ENCODE measurements at regions of chr22 and their contacts with region 1.

Region 1: GRCh38 chr22:39496131-39496838 is 5.8 kb upstream of the MIEF1 start:
- DNase-seq: peak in 8 of 9 experiments; percentile 28 to 63 (median 52)
- ATAC-seq: peak; percentile 75
- H3K4me3 ChIP-seq: no peak overlapping the region
- H3K4me3 Mint-ChIP-seq: no peak overlapping the region
- H3K27ac ChIP-seq: no peak overlapping the region
- H3K27ac Mint-ChIP-seq: no peak overlapping the region
- H3K4me1 ChIP-seq: no peaks in the 10 kb centered on the region
- H3K4me1 Mint-ChIP-seq: peaks cover 8% of the 10 kb centered on the region
- H3K27me3 ChIP-seq: no peaks in the 10 kb centered on the region
- H3K27me3 Mint-ChIP-seq: no peaks in the 10 kb centered on the region
- CTCF ChIP-seq: peak; percentile 71

Region 2: GRCh38 chr22:39439170-39439569 is 57.1 kb before region 1 on chr22:
- CTCF ChIA-PET with region 1: interaction called, 18 read pairs
- POLR2A ChIA-PET with region 1: no interaction called
- intact Hi-C with region 1: no loop called
- DNase-seq: no peak
- ATAC-seq: no peak
- H3K4me3 ChIP-seq: no peak overlapping the region
- H3K4me3 Mint-ChIP-seq: no peak overlapping the region
- H3K27ac ChIP-seq: no peak overlapping the region
- H3K27ac Mint-ChIP-seq: no peak overlapping the region
- H3K4me1 ChIP-seq: peaks cover 17% of the 10 kb centered on the region
- H3K4me1 Mint-ChIP-seq: peaks cover 16% of the 10 kb centered on the region
- H3K27me3 ChIP-seq: peaks cover 0 to 3% of the 10 kb centered on the region in 2 experiments
- H3K27me3 Mint-ChIP-seq: peaks cover 15% of the 10 kb centered on the region
- CTCF ChIP-seq: no peak

Region 3: GRCh38 chr22:39478441-39479264 is 17.6 kb before region 1 on chr22:
- CTCF ChIA-PET with region 1: interaction called, 42 read pairs
- POLR2A ChIA-PET with region 1: no interaction called
- intact Hi-C with region 1: no loop called
- DNase-seq: peak in 3 of 9 experiments; percentile 21 to 23 (median 23)
- ATAC-seq: no peak
- H3K4me3 ChIP-seq: no peak overlapping the region
- H3K4me3 Mint-ChIP-seq: no peak overlapping the region
- H3K27ac ChIP-seq: no peak overlapping the region
- H3K27ac Mint-ChIP-seq: no peak overlapping the region
- H3K4me1 ChIP-seq: no peaks in the 10 kb centered on the region
- H3K4me1 Mint-ChIP-seq: no peaks in the 10 kb centered on the region
- H3K27me3 ChIP-seq: no peaks in the 10 kb centered on the region
- H3K27me3 Mint-ChIP-seq: peaks cover 2% of the 10 kb centered on the region
- CTCF ChIP-seq: no peak

Region 4: DNA sequence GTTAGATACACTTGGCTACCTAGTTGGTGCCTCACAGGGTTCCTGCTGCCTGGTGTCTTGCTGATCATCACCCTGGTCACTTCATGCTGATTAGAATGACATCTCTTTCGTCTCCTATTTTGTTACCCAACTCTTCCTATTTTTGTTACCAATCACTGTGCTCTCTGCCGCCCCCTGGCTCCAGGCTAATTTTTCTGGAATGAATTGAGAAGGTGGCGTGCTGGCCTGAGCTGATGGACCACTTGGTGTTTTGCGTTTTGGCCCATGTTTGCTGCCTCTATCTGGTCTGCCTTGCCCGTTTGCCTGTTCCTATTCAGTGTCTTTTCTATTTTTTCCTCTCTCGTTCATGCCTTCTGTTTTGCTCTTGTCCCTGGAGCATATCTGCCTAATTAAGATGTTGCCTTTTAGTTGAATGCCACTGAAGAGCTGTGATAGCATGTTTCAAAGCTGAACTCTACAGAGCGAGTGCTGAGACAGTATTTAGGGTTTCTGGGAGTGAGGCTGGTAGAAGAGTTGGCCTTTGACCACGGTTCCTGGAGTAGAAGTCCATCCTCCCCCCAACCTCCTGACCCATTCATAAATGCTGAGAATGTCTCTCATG is 18.2 kb after region 1 on chr22:
- CTCF ChIA-PET with region 1: interaction called, 43 read pairs
- POLR2A ChIA-PET with region 1: interaction called, 20 read pairs
- intact Hi-C with region 1: loop called in 1 of 2 experiments (anchors 2 kb)
- DNase-seq: peak in 6 of 9 experiments; percentile 36 to 61 (median 54)
- ATAC-seq: peak; percentile 55
- H3K4me3 ChIP-seq: no peak overlapping the region
- H3K4me3 Mint-ChIP-seq: no peak overlapping the region
- H3K27ac ChIP-seq: no peak overlapping the region
- H3K27ac Mint-ChIP-seq: no peak overlapping the region
- H3K4me1 ChIP-seq: peaks cover 8% of the 10 kb centered on the region
- H3K4me1 Mint-ChIP-seq: peaks cover 20% of the 10 kb centered on the region
- H3K27me3 ChIP-seq: no peaks in the 10 kb centered on the region
- H3K27me3 Mint-ChIP-seq: no peaks in the 10 kb centered on the region
- CTCF ChIP-seq: peak; percentile 67

Region 5: DNA sequence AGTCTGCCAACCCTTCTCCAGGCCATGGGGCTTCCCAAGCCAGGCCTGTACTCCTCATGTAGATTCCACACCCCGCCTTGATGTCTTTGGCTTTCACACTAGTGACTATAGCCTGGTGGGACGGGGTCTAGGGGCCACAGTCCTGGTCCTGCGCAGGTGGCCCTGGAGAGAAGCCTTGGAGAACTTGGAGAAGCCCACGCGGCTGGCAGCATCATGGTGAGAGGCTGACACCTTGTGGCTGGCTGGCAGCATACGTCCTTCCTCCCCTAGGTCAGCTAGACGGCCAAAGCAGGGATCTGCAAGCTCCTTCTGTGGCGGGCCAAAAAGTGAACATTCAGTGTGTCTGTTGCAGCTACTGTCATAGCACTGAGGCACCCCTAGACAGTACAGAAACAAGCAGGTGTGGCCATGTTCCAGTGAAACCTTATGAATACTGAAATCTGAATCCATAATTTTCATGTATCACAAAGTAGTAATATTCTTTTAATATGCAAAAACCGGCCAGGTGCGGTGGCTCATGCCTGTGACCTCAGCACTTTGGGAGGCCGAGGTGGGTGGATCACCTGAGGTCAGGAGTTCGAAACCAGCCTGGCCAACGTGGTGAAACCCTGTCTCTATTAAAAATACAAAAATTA is 540.4 kb after region 1 on chr22:
- CTCF ChIA-PET with region 1: interaction called, 6 read pairs
- POLR2A ChIA-PET with region 1: no interaction called
- intact Hi-C with region 1: loop called (anchors 1 to 2 kb)
- DNase-seq: peak in 8 of 9 experiments; percentile 31 to 71 (median 46)
- ATAC-seq: peak; percentile 67
- H3K4me3 ChIP-seq: no peak overlapping the region
- H3K4me3 Mint-ChIP-seq: no peak overlapping the region
- H3K27ac ChIP-seq: no peak overlapping the region
- H3K27ac Mint-ChIP-seq: no peak overlapping the region
- H3K4me1 ChIP-seq: no peaks in the 10 kb centered on the region
- H3K4me1 Mint-ChIP-seq: peaks cover 10% of the 10 kb centered on the region
- H3K27me3 ChIP-seq: no peaks in the 10 kb centered on the region
- H3K27me3 Mint-ChIP-seq: peaks cover 21% of the 10 kb centered on the region
- CTCF ChIP-seq: peak; percentile 61